Endothelial cell of umbilical vein (primary cell): ENCODE measurements at regions of chr4 and their contacts with region 1.

Region 1: DNA sequence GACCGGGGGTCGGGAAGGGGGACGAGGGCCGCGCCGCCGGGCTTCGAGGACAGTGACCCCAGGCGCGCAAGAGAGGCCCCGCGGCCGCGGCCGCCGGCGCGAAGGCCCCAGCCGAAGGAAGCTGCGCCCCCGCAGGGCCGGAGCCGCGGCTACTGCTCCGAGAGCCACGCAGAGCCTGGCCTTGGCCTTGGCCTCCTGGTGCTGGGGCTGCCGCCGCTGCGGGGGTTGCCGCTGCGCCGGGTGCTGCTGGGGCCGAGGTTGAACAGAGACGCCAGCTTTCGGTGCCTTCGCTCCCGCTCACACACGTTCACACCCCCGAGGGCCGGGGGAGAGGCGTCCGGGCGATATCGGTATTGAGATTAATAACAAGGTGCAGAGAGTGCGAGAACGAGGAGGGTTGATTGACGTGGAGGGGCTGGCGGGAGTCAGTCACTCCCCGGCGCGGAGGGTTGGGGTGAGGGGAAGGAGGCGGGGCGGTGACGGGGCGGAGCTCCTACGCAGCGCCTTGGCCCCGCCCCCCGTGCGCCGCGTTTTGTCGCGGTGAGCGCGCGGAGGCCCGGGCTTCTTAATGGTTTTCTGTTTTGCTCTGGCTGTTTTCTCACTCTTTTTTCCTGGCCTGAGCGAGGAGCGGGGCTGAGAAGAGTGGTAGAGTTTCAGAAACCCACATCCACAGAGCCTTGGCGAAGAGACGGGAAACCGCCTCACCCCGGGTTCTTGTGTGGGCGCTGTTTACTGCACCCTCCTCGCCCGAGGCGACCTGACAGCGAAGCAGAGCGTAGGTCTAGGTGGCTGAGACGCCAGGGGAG is 878 bp upstream of the CNOT6L start:
- DNase-seq: peak; percentile 89
- H3K4me3 ChIP-seq: peak overlapping the region; percentile 85 to 99 (median 94)
- H3K27ac ChIP-seq: peak overlapping the region; percentile 96
- H3K4me1 ChIP-seq: peaks cover 28% of the 10 kb centered on the region
- H3K27me3 ChIP-seq: no peaks in the 10 kb centered on the region
- CTCF ChIP-seq: no peak
- POLR2A ChIP-seq: peak; percentile 90

Region 2: DNA sequence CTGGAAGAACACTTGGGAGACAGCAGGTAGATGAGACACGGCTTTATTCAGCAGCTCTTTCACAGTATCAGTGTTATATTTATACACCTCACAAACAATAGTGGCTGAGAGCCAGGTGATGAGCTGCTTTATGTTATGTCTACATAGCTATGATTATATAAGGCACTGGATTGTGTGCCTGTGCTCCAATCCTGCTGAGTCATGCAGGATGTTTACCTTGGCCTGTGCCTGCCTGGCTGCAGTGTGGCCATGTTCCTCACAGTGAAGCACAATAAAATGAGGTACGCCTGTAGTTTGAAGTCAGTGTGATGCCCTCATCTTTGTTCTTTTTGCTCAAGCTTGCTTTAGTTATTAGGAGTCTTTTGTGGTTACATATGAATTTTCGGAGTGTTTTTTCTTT is 183.1 kb before region 1 on chr4:
- CTCF ChIA-PET with region 1: no interaction called
- POLR2A ChIA-PET with region 1: no interaction called
- dilution Hi-C with region 1: no loop called
- intact Hi-C with region 1: loop called (anchors 10 kb)
- DNase-seq: peak; percentile 97
- H3K4me3 ChIP-seq: no peak overlapping the region
- H3K27ac ChIP-seq: peak overlapping the region; percentile 51
- H3K4me1 ChIP-seq: peaks cover 10% of the 10 kb centered on the region
- H3K27me3 ChIP-seq: peaks cover 0 to 1% of the 10 kb centered on the region in 2 experiments
- CTCF ChIP-seq: no peak
- POLR2A ChIP-seq: no peak

Region 3: GRCh38 chr4:77854431-77855111 is 34.5 kb after region 1 on chr4:
- CTCF ChIA-PET with region 1: interaction called, 3 read pairs
- POLR2A ChIA-PET with region 1: no interaction called
- dilution Hi-C with region 1: no loop called
- intact Hi-C with region 1: loop called (anchors 1 kb)
- DNase-seq: peak; percentile 87
- H3K4me3 ChIP-seq: peak overlapping the region in 1 of 3 experiments; percentile 24
- H3K27ac ChIP-seq: peak overlapping the region; percentile 89
- H3K4me1 ChIP-seq: peaks cover 27% of the 10 kb centered on the region
- H3K27me3 ChIP-seq: no peaks in the 10 kb centered on the region
- CTCF ChIP-seq: no peak
- POLR2A ChIP-seq: peak; percentile 62

Region 4: DNA sequence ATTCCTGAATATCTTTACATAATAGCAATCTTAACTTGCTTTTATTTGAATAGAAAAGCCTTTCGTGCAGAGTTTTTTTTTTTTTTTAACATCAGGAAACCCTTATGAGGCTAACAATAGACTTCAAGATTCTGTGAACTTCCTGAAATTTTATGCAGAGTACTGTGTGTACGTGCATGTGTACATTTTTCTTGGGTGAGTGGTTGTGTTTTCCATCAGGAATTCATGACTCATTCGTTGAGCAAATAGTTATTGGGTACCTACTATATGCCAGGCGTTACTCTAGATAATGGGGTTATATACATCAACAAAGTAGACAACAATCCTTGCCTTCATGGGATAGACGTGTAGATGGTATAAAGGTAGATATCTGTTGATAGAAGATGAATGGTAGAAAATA is 101.7 kb after region 1 on chr4:
- CTCF ChIA-PET with region 1: no interaction called
- POLR2A ChIA-PET with region 1: interaction called, 3 read pairs
- dilution Hi-C with region 1: no loop called
- intact Hi-C with region 1: loop called (anchors 1 kb)
- DNase-seq: peak; percentile 97
- H3K4me3 ChIP-seq: peak overlapping the region in 1 of 3 experiments; percentile 37
- H3K27ac ChIP-seq: peak overlapping the region; percentile 99
- H3K4me1 ChIP-seq: peaks cover 58% of the 10 kb centered on the region
- H3K27me3 ChIP-seq: no peaks in the 10 kb centered on the region
- CTCF ChIP-seq: no peak
- POLR2A ChIP-seq: peak; percentile 62

Region 5: GRCh38 chr4:77927991-77928925 is 108.2 kb after region 1 on chr4:
- CTCF ChIA-PET with region 1: interaction called, 3 read pairs
- POLR2A ChIA-PET with region 1: interaction called, 3 read pairs
- dilution Hi-C with region 1: no loop called
- intact Hi-C with region 1: loop called (anchors 1 kb)
- DNase-seq: peak; percentile 92
- H3K4me3 ChIP-seq: no peak overlapping the region
- H3K27ac ChIP-seq: peak overlapping the region; percentile 96
- H3K4me1 ChIP-seq: peaks cover 59% of the 10 kb centered on the region
- H3K27me3 ChIP-seq: no peaks in the 10 kb centered on the region
- CTCF ChIP-seq: no peak
- POLR2A ChIP-seq: no peak

Region 6: DNA sequence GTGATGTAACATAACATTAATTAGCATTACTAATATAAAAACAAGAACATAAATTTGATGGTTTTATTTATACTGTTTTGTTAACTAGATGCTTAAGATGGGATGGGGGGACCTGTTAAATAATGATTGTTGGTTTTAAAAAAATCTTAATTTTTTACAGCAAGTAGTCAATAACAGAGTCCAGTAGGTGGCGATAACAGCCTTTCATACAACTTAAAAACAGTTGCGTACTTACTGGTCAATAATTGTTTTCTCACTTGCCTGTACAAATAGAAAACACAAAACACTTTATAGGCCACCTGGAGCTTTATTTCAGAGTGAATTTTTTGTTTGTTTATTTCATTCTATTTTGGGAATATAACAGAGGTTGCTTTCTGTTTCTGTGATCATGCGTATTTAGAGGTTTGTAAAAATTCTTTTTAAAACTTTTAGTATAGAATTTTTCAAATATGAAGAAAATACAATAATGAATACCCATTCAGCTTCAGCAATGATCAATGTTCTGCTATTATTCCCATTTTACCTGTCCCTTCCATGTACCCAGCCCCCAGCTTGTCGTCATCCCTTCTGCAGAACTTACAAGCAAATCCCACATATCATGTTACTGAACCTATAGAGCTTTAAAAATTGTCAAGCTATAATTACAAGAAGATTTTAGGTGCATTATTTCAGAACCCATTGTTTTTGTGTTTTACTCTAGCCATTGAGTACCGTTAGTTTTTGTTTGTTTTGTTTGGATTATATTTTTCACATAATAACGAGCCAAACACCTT is 139.7 kb after region 1 on chr4:
- CTCF ChIA-PET with region 1: no interaction called
- POLR2A ChIA-PET with region 1: no interaction called
- dilution Hi-C with region 1: no loop called
- intact Hi-C with region 1: loop called (anchors 2 kb)
- DNase-seq: peak; percentile 55
- H3K4me3 ChIP-seq: no peak overlapping the region
- H3K27ac ChIP-seq: no peak overlapping the region
- H3K4me1 ChIP-seq: no peaks in the 10 kb centered on the region
- H3K27me3 ChIP-seq: no peaks in the 10 kb centered on the region
- CTCF ChIP-seq: peak; percentile 27 to 45
- POLR2A ChIP-seq: no peak